Activated naive CD8-positive, alpha-beta T cell treated with anti-CD3 and anti-CD28 coated beads, Interleukin-2, amount 10 ng/mL, durations not matched to agents 7 days and 5 days (primary cell): ENCODE measurements at regions of chr1 and their contacts with region 1.

Region 1: DNA sequence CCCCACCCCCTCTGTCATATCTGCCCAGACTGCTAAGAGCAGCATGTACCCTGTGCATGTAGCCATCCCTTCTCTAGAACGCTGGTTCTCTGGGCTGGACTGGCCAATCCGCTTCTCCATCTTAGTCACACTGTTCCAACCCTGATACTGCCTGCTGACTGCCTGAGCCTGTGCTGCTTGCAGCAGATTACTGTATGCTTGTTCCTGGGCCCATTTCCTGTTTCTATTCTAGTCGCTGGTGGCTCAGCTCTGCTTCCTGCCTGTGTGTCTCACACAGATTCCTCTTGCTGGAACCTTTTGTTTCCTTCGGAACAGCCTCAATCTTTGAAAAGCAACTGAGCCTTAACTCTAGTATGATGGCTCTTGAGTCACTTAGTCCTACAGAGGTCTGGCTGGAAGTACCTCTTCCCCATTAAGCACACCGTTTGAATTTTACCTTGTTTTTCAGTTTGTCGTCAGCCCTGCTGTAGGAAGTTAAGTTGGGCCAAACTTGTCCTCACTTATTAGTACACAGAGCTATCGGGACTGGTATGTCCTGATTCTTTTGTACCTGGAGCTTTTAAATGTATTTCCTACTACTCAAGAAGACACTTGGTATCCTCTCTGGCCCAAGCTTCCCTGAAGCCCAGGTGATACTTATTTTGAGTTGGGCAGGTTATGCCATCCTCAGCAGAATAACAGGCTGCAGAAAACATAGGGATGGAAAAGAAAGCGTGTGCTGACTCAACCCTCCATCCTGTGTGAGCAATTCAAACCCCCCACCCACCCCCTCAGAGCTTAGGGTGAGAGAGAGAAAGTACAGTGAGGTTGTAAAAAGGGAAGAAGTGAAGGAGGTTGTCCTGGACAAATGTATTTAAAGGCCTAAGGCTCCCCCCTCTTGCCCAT is 43.4 kb upstream of the PIGV start:
- DNase-seq: peak; percentile 65
- ATAC-seq: peak; percentile 99
- H3K4me3 Mint-ChIP-seq: peak overlapping the region; percentile 85
- H3K27ac Mint-ChIP-seq: peak overlapping the region; percentile 97
- H3K4me1 Mint-ChIP-seq: peaks cover 61% of the 10 kb centered on the region
- H3K27me3 Mint-ChIP-seq: no peaks in the 10 kb centered on the region

Region 2: DNA sequence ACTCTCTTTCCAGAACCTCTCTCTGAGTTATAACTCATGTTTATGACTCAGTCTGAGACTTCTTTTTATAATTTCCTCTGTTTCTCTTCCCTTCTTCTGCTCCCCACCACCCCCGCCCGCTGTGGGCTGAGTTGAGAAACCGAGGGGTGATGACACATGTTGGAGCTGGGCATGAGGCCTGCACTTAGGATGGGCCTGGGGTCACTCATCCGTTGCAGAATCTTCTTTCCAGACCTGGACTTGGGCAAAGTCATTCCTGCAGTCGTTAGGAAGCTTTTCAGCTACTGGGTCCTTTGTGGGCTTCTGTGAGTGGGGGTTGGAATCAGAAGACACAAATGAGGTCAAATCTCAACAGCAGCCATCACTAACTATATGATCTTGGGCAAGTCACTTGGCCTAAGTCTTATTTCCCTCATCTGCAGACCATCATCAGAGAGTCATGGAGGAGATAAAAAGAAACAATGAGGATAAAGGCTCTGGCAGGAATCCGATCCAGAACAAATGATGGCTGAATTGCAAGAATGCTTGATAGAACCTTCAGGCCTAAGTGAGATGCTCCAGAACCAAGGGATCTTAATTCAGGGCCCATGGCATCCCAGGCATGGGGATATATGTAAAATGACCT is 161.4 kb before region 1 on chr1:
- POLR2A ChIA-PET with region 1: no interaction called
- DNase-seq: no peak
- ATAC-seq: no peak
- H3K4me3 Mint-ChIP-seq: no peak overlapping the region
- H3K27ac Mint-ChIP-seq: no peak overlapping the region
- H3K4me1 Mint-ChIP-seq: peaks cover 18% of the 10 kb centered on the region
- H3K27me3 Mint-ChIP-seq: no peaks in the 10 kb centered on the region

Region 3: DNA sequence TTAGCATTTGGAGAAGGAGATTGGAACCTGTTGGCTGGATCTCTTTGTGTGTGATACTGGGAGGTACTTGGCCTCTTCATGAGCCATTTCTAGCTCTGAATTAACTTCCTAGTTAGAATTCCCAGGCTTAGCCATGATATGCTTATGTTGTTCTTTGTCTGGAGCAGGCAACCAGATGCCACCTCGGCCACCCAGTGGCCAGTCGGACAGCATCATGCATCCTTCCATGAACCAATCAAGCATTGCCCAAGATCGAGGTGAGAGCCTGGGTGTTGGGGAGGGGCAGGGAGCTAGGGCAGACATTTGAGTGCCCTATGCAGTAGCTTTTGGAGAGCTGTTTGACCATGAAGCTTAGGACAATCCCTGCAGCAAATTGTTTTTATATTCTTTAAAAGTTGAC is 16.9 kb after region 1 on chr1:
- POLR2A ChIA-PET with region 1: no interaction called
- DNase-seq: no peak
- ATAC-seq: no peak
- H3K4me3 Mint-ChIP-seq: no peak overlapping the region
- H3K27ac Mint-ChIP-seq: no peak overlapping the region
- H3K4me1 Mint-ChIP-seq: peaks cover 20% of the 10 kb centered on the region
- H3K27me3 Mint-ChIP-seq: no peaks in the 10 kb centered on the region

Region 4: GRCh38 chr1:28518000-28518744 is 1773.9 kb after region 1 on chr1:
- POLR2A ChIA-PET with region 1: interaction called, 10 read pairs
- DNase-seq: peak; percentile 93
- ATAC-seq: peak; percentile 84
- H3K4me3 Mint-ChIP-seq: peak overlapping the region; percentile 98
- H3K27ac Mint-ChIP-seq: peak overlapping the region; percentile 92
- H3K4me1 Mint-ChIP-seq: peaks cover 32% of the 10 kb centered on the region
- H3K27me3 Mint-ChIP-seq: no peaks in the 10 kb centered on the region